Cardiac septum (tissue), 1 donor: ENCODE measurements at regions of chr21 and their contacts with region 1.

Region 1: DNA sequence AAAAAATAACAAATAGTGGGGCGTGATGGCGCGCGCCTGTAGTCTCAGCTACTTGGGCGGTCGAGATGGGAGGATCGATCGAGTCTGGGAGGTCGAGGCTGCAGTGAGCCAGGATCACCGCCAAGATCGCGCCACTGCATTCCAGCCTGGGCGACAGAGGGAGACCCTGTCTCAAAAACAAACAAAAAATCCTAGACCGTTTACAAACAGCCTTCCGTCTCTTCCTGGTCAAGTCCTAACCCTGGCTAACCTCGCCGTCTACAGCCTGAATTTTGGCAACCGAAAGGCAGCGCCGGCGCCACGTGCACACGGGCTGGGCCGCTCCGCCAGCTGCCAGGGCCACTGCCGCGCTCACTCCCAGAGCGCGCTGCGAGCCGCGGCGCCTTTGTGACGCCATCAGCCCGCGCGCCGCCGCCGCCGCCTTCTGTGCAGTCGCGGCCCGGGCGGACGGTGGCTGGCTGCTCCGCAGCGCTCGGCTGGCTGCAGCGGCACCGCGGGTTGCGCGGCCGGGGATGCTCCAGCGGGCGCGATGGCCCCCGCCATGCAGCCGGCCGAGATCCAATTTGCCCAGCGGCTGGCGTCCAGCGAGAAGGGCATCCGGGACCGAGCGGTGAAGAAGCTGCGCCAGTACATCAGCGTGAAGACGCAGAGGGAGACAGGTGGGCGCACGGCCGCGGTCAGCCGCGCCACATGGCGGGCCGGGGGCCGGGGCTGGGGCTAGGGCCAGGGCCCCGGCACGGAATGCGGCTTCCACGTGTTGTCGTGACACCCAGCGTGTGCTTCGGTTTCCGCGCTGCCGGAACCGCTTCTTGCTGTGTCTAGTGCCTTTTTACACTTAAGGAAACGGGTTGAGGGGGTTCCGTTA is at the starts of genes HSF2BP and RRP1B:
- DNase-seq: peak; percentile 86
- total RNA-seq, gene HSF2BP: not detected
- total RNA-seq, gene RRP1B: 8.7 TPM

Region 2: DNA sequence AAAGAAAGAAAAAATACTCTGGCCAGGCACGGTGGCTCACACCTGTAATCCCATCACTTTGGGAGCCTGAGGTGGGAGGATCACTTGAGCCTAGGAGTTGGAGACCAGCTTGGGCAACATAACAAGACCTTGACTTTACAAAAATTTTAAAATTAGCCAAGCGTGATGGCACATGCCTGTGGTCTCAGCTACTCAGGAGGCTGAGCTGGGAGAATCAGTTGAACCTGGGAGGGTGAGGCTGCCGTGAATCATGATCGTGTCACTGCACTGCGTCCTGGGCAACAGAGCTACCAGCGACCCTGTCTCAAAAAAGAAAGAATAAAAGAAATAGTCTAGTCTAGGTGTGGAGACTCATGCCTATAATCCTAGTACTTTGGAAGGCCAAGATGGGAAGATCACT is 22.3 kb after region 1 on chr21:
- intact Hi-C with region 1: loop called (anchors 2 kb)
- DNase-seq: no peak

Region 3: GRCh38 chr21:43728467-43729390 is 69.4 kb after region 1 on chr21:
- intact Hi-C with region 1: no loop called
- DNase-seq: peak; percentile 98

Region 4: GRCh38 chr21:43789276-43790009 is 130.1 kb after region 1 on chr21 and contains the start of gene RRP1:
- intact Hi-C with region 1: loop called (anchors 2 kb)
- DNase-seq: peak; percentile 95
- total RNA-seq, gene RRP1: 10.3 TPM